ENCODE measurements at regions of chr17 and their contacts with region 1.

Region 1: GRCh38 chr17:60036796-60037612 is 41.7 kb downstream of the HEATR6 start:
- DNase-seq: peak; percentile 85
- ATAC-seq: peak; percentile 98
- H3K4me3 Mint-ChIP-seq: no peak overlapping the region
- H3K27ac Mint-ChIP-seq: no peak overlapping the region
- H3K4me1 Mint-ChIP-seq: peaks cover 8% of the 10 kb centered on the region
- H3K27me3 Mint-ChIP-seq: peaks cover 14% of the 10 kb centered on the region

Region 2: GRCh38 chr17:59220376-59221158 is 816.4 kb before region 1 on chr17 and contains the start of gene GDPD1:
- CTCF ChIA-PET with region 1: no interaction called
- POLR2A ChIA-PET with region 1: no interaction called
- intact Hi-C with region 1: loop called in 1 of 2 experiments (anchors 5 kb)
- DNase-seq: peak; percentile 99
- ATAC-seq: peak; percentile 99
- H3K4me3 Mint-ChIP-seq: peak within 1 kb of the TSS; percentile 93
- H3K27ac Mint-ChIP-seq: peak within 1 kb of the TSS; percentile 86
- H3K4me1 Mint-ChIP-seq: peaks cover 12% of the 10 kb centered on the region
- H3K27me3 Mint-ChIP-seq: no peaks in the 10 kb centered on the region
- total RNA-seq, gene GDPD1: 2.5 to 2.7 TPM

Region 3: GRCh38 chr17:59521204-59522126 is 515.5 kb before region 1 on chr17:
- CTCF ChIA-PET with region 1: interaction called, 6 read pairs
- POLR2A ChIA-PET with region 1: no interaction called
- intact Hi-C with region 1: loop called (anchors 5 kb)
- DNase-seq: peak; percentile 80
- ATAC-seq: peak; percentile 85
- H3K4me3 Mint-ChIP-seq: no peak overlapping the region
- H3K27ac Mint-ChIP-seq: no peak overlapping the region
- H3K4me1 Mint-ChIP-seq: peaks cover 4% of the 10 kb centered on the region
- H3K27me3 Mint-ChIP-seq: peaks cover 9% of the 10 kb centered on the region

Region 4: DNA sequence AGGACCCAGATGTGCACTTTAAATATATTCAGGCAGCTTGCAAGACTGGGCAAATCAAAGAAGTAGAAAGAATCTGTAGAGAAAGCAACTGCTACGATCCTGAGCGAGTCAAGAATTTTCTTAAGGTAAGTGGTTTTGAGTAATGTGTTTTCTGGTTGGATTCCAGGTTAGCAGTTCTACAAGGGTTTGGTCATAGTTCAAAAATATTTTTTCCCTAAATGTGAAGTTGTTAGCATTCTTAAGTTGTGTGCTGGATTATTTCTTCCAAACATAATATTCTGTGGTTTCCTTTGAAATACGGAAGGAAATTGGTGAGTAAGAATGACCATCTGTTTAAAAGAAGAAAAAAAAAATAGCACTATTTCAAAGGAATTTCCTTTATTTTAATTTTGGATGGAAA is 368.2 kb before region 1 on chr17:
- CTCF ChIA-PET with region 1: no interaction called
- POLR2A ChIA-PET with region 1: no interaction called
- intact Hi-C with region 1: no loop called
- DNase-seq: no peak
- ATAC-seq: no peak
- H3K4me3 Mint-ChIP-seq: no peak overlapping the region
- H3K27ac Mint-ChIP-seq: peak overlapping the region; percentile 51
- H3K4me1 Mint-ChIP-seq: peaks cover 31% of the 10 kb centered on the region
- H3K27me3 Mint-ChIP-seq: no peaks in the 10 kb centered on the region

Region 5: GRCh38 chr17:59753522-59754467 is 283.2 kb before region 1 on chr17:
- CTCF ChIA-PET with region 1: interaction called, 16 read pairs
- POLR2A ChIA-PET with region 1: no interaction called
- intact Hi-C with region 1: loop called in 1 of 2 experiments (anchors 5 kb)
- DNase-seq: no peak
- ATAC-seq: peak; percentile 47
- H3K4me3 Mint-ChIP-seq: peak overlapping the region; percentile 66
- H3K27ac Mint-ChIP-seq: peak overlapping the region; percentile 92
- H3K4me1 Mint-ChIP-seq: peaks cover 71% of the 10 kb centered on the region
- H3K27me3 Mint-ChIP-seq: no peaks in the 10 kb centered on the region

Region 6: GRCh38 chr17:59914274-59914854 is 122.6 kb before region 1 on chr17:
- CTCF ChIA-PET with region 1: interaction called, 39 read pairs
- POLR2A ChIA-PET with region 1: no interaction called
- intact Hi-C with region 1: loop called (anchors 2 kb)
- DNase-seq: no peak
- ATAC-seq: no peak
- H3K4me3 Mint-ChIP-seq: no peak overlapping the region
- H3K27ac Mint-ChIP-seq: no peak overlapping the region
- H3K4me1 Mint-ChIP-seq: no peaks in the 10 kb centered on the region
- H3K27me3 Mint-ChIP-seq: no peaks in the 10 kb centered on the region

Region 7: GRCh38 chr17:59964482-59965328 is 72.3 kb before region 1 on chr17 and contains the start of gene RNFT1:
- CTCF ChIA-PET with region 1: interaction called, 6 read pairs
- POLR2A ChIA-PET with region 1: interaction called, 3 read pairs
- intact Hi-C with region 1: loop called (anchors 5 to 10 kb)
- DNase-seq: peak; percentile 97
- ATAC-seq: peak; percentile 84
- H3K4me3 Mint-ChIP-seq: peak within 1 kb of the TSS; percentile 78
- H3K27ac Mint-ChIP-seq: peak within 1 kb of the TSS; percentile 96
- H3K4me1 Mint-ChIP-seq: peaks cover 19% of the 10 kb centered on the region
- H3K27me3 Mint-ChIP-seq: no peaks in the 10 kb centered on the region
- total RNA-seq, gene RNFT1: 32.8 to 36.9 TPM